ENCODE measurements at regions of chr7 and their contacts with region 1.

Region 1: DNA sequence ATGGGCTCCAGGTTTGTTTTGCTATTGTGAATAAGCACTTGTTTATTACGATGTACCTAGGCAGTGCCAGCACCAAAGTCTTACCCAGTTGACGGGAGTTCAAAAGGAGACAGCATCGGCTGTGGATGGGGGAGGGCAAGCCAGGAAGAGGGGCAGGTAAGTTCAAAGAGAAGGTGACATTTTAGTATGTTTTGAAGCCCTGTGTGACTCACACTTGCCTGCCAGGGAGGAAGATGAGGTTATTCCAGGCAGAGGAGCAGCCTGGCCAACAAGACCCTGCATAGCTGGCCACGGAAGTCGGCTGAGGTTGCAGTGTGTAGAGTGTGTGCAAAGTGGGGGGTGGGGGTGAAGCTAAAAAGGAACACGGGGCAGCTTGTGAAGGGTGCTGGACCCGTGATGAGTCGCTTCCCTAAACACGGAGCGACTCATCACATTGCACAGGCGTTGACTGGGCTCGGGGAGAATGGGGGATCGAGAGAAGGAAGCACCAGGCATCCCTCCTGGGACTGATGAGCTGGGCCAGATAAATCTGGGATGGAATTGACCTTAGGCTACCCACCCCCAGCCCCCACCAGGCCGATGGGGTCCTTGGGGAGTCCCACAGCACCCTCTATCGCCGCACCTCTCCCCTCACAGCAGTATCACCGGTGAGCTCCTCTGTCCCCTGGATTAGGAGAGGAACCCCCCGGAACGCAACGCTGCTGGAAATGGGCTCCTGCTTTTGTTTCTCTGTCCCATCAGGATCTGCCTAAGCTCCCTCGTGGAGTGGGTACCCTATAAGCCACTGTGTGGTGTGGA is 97.9 kb upstream of the IKZF1 start:
- DNase-seq: peak; percentile 63 to 91 (median 65)
- H3K4me3 ChIP-seq: peak overlapping the region; percentile 4 to 14
- H3K4me3 Mint-ChIP-seq: peak overlapping the region; percentile 73 to 88 (median 81)
- H3K27ac ChIP-seq: peak overlapping the region; percentile 18
- H3K27ac Mint-ChIP-seq: peak overlapping the region; percentile 90 to 97 (median 93)
- H3K4me1 ChIP-seq: peaks cover 79% of the 10 kb centered on the region
- H3K4me1 Mint-ChIP-seq: peaks cover 63 to 88% (median 72%) of the 10 kb centered on the region in 4 donors
- H3K27me3 ChIP-seq: no peaks in the 10 kb centered on the region
- H3K27me3 Mint-ChIP-seq: no peaks in the 10 kb centered on the region

Region 2: DNA sequence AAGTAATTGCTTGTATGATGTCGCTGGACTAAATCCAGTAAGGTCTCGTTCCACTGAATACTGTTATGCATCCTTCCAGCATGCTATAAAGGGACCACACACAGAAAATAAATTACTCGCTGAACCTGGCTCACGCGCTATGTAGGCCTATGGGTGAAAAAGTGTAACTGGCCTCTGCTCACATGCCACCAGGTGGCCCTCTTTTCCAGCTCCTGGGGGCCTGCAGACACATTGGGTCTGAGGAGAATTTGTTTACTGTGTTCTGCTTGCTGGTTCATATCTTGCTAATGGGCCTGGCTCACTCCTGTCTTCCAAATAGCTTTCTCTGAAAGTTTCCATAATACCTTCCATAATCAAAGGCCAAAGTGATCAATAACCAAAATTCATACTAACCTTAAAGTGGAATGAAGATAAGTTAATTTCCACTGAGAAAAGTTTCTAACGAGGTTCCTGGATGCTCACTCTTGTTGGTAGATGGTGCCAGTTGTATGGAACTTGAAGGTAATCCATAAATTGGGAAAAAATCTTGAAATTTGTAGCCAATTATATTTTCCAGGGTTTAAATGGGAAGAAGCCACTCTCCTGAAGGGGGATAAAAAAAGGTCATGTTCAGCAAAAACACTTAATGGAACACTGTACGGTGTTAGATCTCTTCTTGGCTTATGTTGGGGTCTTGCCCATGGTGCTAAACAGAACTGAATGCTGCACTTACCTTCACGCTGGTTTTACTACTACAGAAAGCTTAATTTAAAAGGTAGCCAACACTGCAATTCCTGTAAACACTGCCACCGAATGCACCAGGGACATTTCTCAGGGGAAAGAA is 86.6 kb before region 1 on chr7:
- CTCF ChIA-PET with region 1: no interaction called
- POLR2A ChIA-PET with region 1: no interaction called
- intact Hi-C with region 1: no loop called
- DNase-seq: peak in 4 of 5 donors; percentile 14 to 32 (median 16)
- H3K4me3 ChIP-seq: no peak overlapping the region
- H3K4me3 Mint-ChIP-seq: no peak overlapping the region
- H3K27ac ChIP-seq: no peak overlapping the region
- H3K27ac Mint-ChIP-seq: no peak overlapping the region
- H3K4me1 ChIP-seq: no peaks in the 10 kb centered on the region
- H3K4me1 Mint-ChIP-seq: no peaks in the 10 kb centered on the region
- H3K27me3 ChIP-seq: no peaks in the 10 kb centered on the region
- H3K27me3 Mint-ChIP-seq: peaks cover 2 to 5% of the 10 kb centered on the region in 2 donors

Region 3: GRCh38 chr7:50229964-50230363 is 23.3 kb after region 1 on chr7:
- CTCF ChIA-PET with region 1: interaction called, 27 read pairs
- POLR2A ChIA-PET with region 1: interaction called, 38 read pairs
- intact Hi-C with region 1: loop called (anchors 1 kb)
- DNase-seq: no peak
- H3K4me3 ChIP-seq: no peak overlapping the region
- H3K4me3 Mint-ChIP-seq: no peak overlapping the region
- H3K27ac ChIP-seq: no peak overlapping the region
- H3K27ac Mint-ChIP-seq: no peak overlapping the region
- H3K4me1 ChIP-seq: peaks cover 38% of the 10 kb centered on the region
- H3K4me1 Mint-ChIP-seq: peaks cover 31 to 42% (median 36%) of the 10 kb centered on the region in 4 donors
- H3K27me3 ChIP-seq: no peaks in the 10 kb centered on the region
- H3K27me3 Mint-ChIP-seq: no peaks in the 10 kb centered on the region

Region 4: GRCh38 chr7:50298811-50299562 is 92.3 kb after region 1 on chr7:
- CTCF ChIA-PET with region 1: interaction called, 173 read pairs
- POLR2A ChIA-PET with region 1: interaction called, 675 read pairs
- intact Hi-C with region 1: no loop called
- DNase-seq: no peak
- H3K4me3 ChIP-seq: no peak overlapping the region
- H3K4me3 Mint-ChIP-seq: no peak overlapping the region
- H3K27ac ChIP-seq: no peak overlapping the region
- H3K27ac Mint-ChIP-seq: peak overlapping the region in 2 of 7 donors; percentile 5 to 63
- H3K4me1 ChIP-seq: peaks cover 40% of the 10 kb centered on the region
- H3K4me1 Mint-ChIP-seq: peaks cover 27 to 67% (median 50%) of the 10 kb centered on the region in 4 donors
- H3K27me3 ChIP-seq: no peaks in the 10 kb centered on the region
- H3K27me3 Mint-ChIP-seq: no peaks in the 10 kb centered on the region

Region 5: GRCh38 chr7:50342616-50343114 is 136.0 kb after region 1 on chr7:
- CTCF ChIA-PET with region 1: interaction called, 51 read pairs
- POLR2A ChIA-PET with region 1: interaction called, 29 read pairs
- intact Hi-C with region 1: no loop called
- DNase-seq: peak; percentile 62 to 88 (median 63)
- H3K4me3 ChIP-seq: peak overlapping the region in 1 of 2 donors; percentile 36
- H3K4me3 Mint-ChIP-seq: peak overlapping the region; percentile 76 to 88 (median 82)
- H3K27ac ChIP-seq: peak overlapping the region; percentile 96
- H3K27ac Mint-ChIP-seq: peak overlapping the region in 4 of 7 donors; percentile 90 to 98 (median 96)
- H3K4me1 ChIP-seq: peaks cover 99% of the 10 kb centered on the region
- H3K4me1 Mint-ChIP-seq: peaks cover 27 to 83% (median 55%) of the 10 kb centered on the region in 4 donors
- H3K27me3 ChIP-seq: no peaks in the 10 kb centered on the region
- H3K27me3 Mint-ChIP-seq: no peaks in the 10 kb centered on the region

Region 6: GRCh38 chr7:50379082-50379481 is 172.4 kb after region 1 on chr7:
- CTCF ChIA-PET with region 1: interaction called, 424 read pairs
- POLR2A ChIA-PET with region 1: interaction called, 29 read pairs
- intact Hi-C with region 1: no loop called
- DNase-seq: no peak
- H3K4me3 ChIP-seq: no peak overlapping the region
- H3K4me3 Mint-ChIP-seq: peak overlapping the region in 4 of 8 donors; percentile 17 to 46 (median 24)
- H3K27ac ChIP-seq: peak overlapping the region; percentile 18
- H3K27ac Mint-ChIP-seq: peak overlapping the region in 6 of 7 donors; percentile 77 to 89 (median 87)
- H3K4me1 ChIP-seq: peaks cover 94% of the 10 kb centered on the region
- H3K4me1 Mint-ChIP-seq: peaks cover 66 to 99% (median 86%) of the 10 kb centered on the region in 4 donors
- H3K27me3 ChIP-seq: no peaks in the 10 kb centered on the region
- H3K27me3 Mint-ChIP-seq: no peaks in the 10 kb centered on the region

Region 7: DNA sequence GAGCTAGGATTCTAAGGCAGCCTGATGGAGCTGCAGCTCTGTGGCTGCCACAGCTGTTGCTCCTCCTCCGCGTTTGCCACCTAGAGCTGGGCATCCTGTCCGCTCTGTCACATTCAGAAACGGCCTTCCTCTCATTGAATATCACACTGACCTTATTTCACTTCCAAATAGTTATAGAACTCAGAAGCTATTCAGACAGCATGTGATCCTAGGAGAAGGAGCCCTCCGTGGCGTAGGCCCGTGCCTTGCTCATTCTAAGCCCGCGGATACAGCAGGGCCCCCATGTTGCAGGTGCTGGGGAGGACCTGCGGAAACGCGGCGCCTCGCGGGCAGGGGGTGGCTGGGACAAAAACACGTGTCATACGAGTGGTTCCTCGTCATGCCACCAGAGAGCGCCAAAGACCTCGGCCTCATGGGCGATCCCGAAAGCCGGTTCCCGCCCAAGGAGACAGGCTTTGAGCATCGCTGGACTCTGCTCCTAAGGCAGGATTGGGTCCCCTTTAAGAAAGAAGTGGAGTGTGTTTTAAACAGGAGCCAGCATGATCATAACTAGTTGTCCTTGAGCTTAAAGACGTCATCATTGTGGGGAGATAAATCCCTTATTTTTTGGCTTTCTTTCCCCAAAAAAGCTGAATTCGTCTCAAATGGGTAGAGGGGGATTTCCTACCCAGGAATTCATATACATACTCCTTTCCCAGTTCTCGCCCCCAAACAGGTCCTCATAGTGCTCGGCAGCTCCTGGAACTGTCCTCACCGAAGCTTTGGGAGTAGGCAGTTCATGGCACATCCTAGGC is 261.4 kb after region 1 on chr7:
- CTCF ChIA-PET with region 1: interaction called, 8 read pairs
- POLR2A ChIA-PET with region 1: no interaction called
- intact Hi-C with region 1: loop called (anchors 1 kb)
- DNase-seq: peak; percentile 72 to 78 (median 74)
- H3K4me3 ChIP-seq: peak overlapping the region in 1 of 2 donors; percentile 6
- H3K4me3 Mint-ChIP-seq: peak overlapping the region; percentile 18 to 79 (median 64)
- H3K27ac ChIP-seq: no peak overlapping the region
- H3K27ac Mint-ChIP-seq: peak overlapping the region in 5 of 7 donors; percentile 55 to 88 (median 81)
- H3K4me1 ChIP-seq: peaks cover 10% of the 10 kb centered on the region
- H3K4me1 Mint-ChIP-seq: peaks cover 2 to 14% (median 9%) of the 10 kb centered on the region in 4 donors
- H3K27me3 ChIP-seq: no peaks in the 10 kb centered on the region
- H3K27me3 Mint-ChIP-seq: peaks cover 0 to 3% of the 10 kb centered on the region in 2 donors